ENCODE measurements at regions of chr9 and their contacts with region 1.

Region 1: DNA sequence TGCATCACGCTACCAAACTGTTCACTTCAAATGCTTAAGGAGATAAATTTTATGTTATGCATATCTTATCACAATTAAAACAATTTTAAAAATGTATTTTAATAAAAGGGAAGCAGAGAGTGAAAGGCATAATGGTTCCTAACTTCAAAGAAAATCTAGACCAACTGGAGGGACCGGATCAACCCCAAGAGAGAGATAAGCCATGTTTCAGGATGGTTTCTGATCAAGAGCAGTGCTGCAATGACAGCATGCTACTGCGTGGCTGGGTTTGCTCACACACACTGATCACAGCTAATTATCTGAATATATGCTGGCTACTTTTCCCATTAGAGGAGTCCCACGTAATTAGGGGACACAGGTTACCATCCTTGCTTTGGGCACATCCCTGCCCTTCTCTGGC is 159.2 kb downstream of the TRIM32 start:
- DNase-seq: no peak
- ATAC-seq: no peak
- H3K4me3 ChIP-seq: no peak overlapping the region
- H3K27ac ChIP-seq: no peak overlapping the region
- H3K4me1 ChIP-seq: no peaks in the 10 kb centered on the region
- H3K27me3 ChIP-seq: no peaks in the 10 kb centered on the region
- CTCF ChIP-seq: no peak
- POLR2A ChIP-seq: no peak
- RAD21 ChIP-seq: no peak

Region 2: GRCh38 chr9:116860509-116861120 is 14.3 kb after region 1 on chr9:
- CTCF ChIA-PET with region 1: interaction called, 11 read pairs
- POLR2A ChIA-PET with region 1: no interaction called
- dilution Hi-C with region 1: no loop called
- in situ Hi-C with region 1: no loop called
- intact Hi-C with region 1: no loop called
- DNase-seq: peak; percentile 63
- ATAC-seq: peak; percentile 99
- H3K4me3 ChIP-seq: no peak overlapping the region
- H3K27ac ChIP-seq: no peak overlapping the region
- H3K4me1 ChIP-seq: no peaks in the 10 kb centered on the region
- H3K27me3 ChIP-seq: no peaks in the 10 kb centered on the region; the same call in 1 of the 2 replicates
- CTCF ChIP-seq: peak; percentile 70
- POLR2A ChIP-seq: no peak
- RAD21 ChIP-seq: peak; percentile 61